Caco-2 (cell line): ENCODE measurements at regions of chr6 and their contacts with region 1.

Region 1: GRCh38 chr6:144265390-144265789 is 19.7 kb upstream of the UTRN start:
- DNase-seq: peak; percentile 61 to 73
- H3K4me3 ChIP-seq: no peak overlapping the region; the same call in 1 of the 2 replicates
- H3K4me3 Mint-ChIP-seq: peak overlapping the region; percentile 68
- H3K27ac Mint-ChIP-seq: peak overlapping the region; percentile 97
- H3K4me1 ChIP-seq: peaks cover 59% of the 10 kb centered on the region
- H3K4me1 Mint-ChIP-seq: peaks cover 22% of the 10 kb centered on the region
- H3K27me3 ChIP-seq: no peaks in the 10 kb centered on the region
- H3K27me3 Mint-ChIP-seq: no peaks in the 10 kb centered on the region
- CTCF ChIP-seq: no peak

Region 2: GRCh38 chr6:144232176-144232831 is 33.1 kb before region 1 on chr6:
- CTCF ChIA-PET with region 1: no interaction called
- POLR2A ChIA-PET with region 1: no interaction called
- intact Hi-C with region 1: no loop called
- DNase-seq: no peak
- H3K4me3 ChIP-seq: no peak overlapping the region
- H3K4me3 Mint-ChIP-seq: no peak overlapping the region
- H3K27ac Mint-ChIP-seq: no peak overlapping the region
- H3K4me1 ChIP-seq: no peaks in the 10 kb centered on the region; the same call in none of the 2 replicates
- H3K4me1 Mint-ChIP-seq: peaks cover 7% of the 10 kb centered on the region
- H3K27me3 ChIP-seq: no peaks in the 10 kb centered on the region
- H3K27me3 Mint-ChIP-seq: no peaks in the 10 kb centered on the region
- CTCF ChIP-seq: no peak

Region 3: DNA sequence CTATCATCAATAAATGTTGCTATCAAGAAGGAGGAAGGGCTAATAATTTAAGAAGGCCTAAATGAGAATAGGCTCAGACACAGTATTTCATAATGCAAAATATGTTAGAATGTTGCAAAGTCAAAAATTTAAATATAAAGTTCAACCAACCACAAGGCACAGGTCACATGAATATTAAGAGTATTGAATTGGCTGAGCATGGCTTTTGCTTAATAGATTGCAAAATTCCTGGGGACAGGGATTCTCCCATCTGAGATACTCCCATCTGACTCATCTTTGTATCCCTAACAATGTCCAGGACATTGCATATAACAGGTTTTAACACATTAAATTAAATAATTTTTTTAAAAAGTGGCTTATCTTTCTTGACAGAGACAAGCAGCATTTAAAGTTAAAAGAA is 13.1 kb before region 1 on chr6:
- CTCF ChIA-PET with region 1: interaction called, 5 read pairs
- POLR2A ChIA-PET with region 1: interaction called, 8 read pairs
- intact Hi-C with region 1: loop called (anchors 1 kb)
- DNase-seq: no peak
- H3K4me3 ChIP-seq: no peak overlapping the region
- H3K4me3 Mint-ChIP-seq: no peak overlapping the region
- H3K27ac Mint-ChIP-seq: no peak overlapping the region
- H3K4me1 ChIP-seq: peaks cover 27% of the 10 kb centered on the region
- H3K4me1 Mint-ChIP-seq: peaks cover 12% of the 10 kb centered on the region
- H3K27me3 ChIP-seq: no peaks in the 10 kb centered on the region
- H3K27me3 Mint-ChIP-seq: no peaks in the 10 kb centered on the region
- CTCF ChIP-seq: no peak

Region 4: DNA sequence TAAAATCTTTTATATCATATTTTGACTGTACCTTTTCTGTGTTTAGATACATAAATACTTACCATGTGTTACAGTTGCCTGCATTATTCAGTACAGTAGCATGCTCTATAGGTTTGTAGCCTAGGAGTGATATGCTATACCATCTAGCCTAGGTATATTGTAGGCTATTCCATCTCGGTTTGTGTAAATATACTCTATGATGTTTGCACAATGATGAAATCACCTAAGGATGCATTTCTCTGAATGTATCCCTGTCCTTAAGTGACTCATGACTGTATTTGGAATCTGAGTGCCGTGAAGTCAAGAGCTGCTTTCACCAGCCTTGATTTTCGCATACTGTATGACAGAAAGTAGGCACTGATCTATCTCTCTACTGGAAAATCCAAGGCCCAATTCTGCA is 149.6 kb after region 1 on chr6:
- CTCF ChIA-PET with region 1: no interaction called
- POLR2A ChIA-PET with region 1: no interaction called
- intact Hi-C with region 1: no loop called
- DNase-seq: peak in 1 of 2 experiments; percentile 45
- H3K4me3 ChIP-seq: no peak overlapping the region
- H3K4me3 Mint-ChIP-seq: peak overlapping the region; percentile 29
- H3K27ac Mint-ChIP-seq: peak overlapping the region; percentile 11
- H3K4me1 ChIP-seq: peaks cover 19% of the 10 kb centered on the region
- H3K4me1 Mint-ChIP-seq: peaks cover 27% of the 10 kb centered on the region
- H3K27me3 ChIP-seq: no peaks in the 10 kb centered on the region
- H3K27me3 Mint-ChIP-seq: no peaks in the 10 kb centered on the region
- CTCF ChIP-seq: no peak